ENCODE measurements at regions of chr5 and their contacts with region 1.

Region 1: GRCh38 chr5:169197343-169197742 is 103.6 kb downstream of the SLIT3 start:
- DNase-seq: no peak
- ATAC-seq: peak; percentile 78

Region 2: DNA sequence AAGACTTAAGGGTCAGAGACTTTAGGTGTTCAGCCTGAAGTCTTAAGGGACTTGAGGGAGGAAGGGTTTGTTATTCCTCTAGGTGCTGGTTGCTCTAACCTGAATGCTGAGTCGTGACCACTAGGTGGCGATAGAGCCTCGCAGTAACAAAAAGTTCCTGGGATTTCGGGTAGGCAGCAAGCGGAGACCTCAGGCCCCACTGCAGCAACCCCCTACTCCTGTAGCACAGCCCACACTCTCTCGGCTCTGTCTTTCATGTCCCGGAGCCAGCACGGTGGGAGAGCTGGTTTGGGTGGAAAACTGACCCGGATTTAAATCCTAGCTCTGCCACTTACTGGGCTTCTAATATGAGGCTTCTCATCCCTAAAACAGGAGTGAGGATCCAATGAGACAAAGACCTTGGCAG is 517.8 kb before region 1 on chr5:
- intact Hi-C with region 1: loop called (anchors 10 kb)
- DNase-seq: peak; percentile 73
- ATAC-seq: peak; percentile 41

Region 3: GRCh38 chr5:168987543-168988300 is 209.6 kb before region 1 on chr5:
- intact Hi-C with region 1: loop called (anchors 5 kb)
- DNase-seq: peak; percentile 81
- ATAC-seq: peak; percentile 56

Region 4: GRCh38 chr5:169116961-169117461 is 80.3 kb before region 1 on chr5:
- intact Hi-C with region 1: loop called (anchors 5 kb)
- DNase-seq: no peak
- ATAC-seq: peak; percentile 66

Region 5: GRCh38 chr5:169286572-169287300 is 89.4 kb after region 1 on chr5:
- intact Hi-C with region 1: no loop called
- DNase-seq: no peak
- ATAC-seq: peak; percentile 88

Region 6: DNA sequence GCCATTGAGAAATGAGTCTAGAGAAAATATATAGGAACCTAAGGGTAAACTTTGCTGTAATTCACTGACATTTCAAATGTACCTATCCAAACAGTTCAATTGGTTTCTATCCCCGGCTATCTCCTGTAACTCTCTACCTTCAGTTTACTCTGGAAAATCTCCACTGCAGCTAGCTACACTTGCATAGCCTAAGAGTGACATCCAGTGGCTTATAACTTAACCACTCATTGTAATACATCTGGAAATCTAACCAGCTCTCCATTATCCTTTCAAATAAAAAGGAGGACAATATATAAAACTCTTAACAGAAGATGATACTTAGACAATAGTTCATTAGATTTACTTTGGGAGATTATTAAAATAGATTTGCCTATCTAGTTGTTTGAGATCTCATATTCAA is 351.0 kb after region 1 on chr5:
- intact Hi-C with region 1: loop called (anchors 5 kb)
- DNase-seq: no peak
- ATAC-seq: peak; percentile 88